Motor neuron (in vitro differentiated cells): ENCODE measurements at regions of chr6 and their contacts with region 1.

Region 1: DNA sequence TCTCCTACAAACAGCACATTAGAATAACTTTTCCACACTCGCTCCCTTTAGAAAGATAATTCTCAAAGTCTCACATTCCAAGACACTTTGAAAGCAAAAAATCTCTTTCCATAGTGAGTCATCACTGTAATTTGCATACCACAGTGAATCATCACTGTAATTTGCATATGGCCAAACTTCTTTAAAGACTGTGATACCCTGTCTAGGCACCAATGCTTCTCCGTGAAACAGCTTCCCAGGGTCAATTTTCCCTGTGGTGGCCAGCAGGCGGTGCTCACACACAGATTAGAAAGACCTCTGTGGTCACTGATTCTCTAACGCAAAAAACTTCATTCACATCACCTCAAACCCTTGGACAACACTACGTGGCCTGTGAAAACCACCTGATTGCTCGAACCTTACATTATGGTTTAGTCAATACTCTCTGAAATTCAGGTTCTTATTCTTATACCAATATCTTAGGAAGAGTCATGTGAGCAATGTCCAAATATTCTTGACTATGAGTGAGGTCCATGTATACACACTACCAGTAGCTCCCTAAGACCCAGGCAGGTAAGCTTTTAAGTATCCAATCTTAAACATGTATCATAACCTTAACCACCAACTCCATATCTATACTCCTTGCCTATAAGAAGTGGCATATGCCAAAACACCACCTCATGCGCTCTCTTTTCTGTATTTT is 78.5 kb upstream of the PHACTR1 start:
- ATAC-seq: peak; percentile 83 to 100 (median 94)
- H3K4me3 ChIP-seq: no peak overlapping the region
- H3K27ac ChIP-seq: no peak overlapping the region
- H3K4me1 ChIP-seq: no peaks in the 10 kb centered on the region

Region 2: GRCh38 chr6:12189661-12190060 is 448.4 kb before region 1 on chr6:
- in situ Hi-C with region 1: no loop called
- ATAC-seq: no peak
- H3K4me3 ChIP-seq: no peak overlapping the region
- H3K27ac ChIP-seq: no peak overlapping the region
- H3K4me1 ChIP-seq: no peaks in the 10 kb centered on the region

Region 3: GRCh38 chr6:12890171-12890790 is 252.2 kb after region 1 on chr6:
- in situ Hi-C with region 1: loop called in 5 of 9 experiments (anchors 25 kb)
- ATAC-seq: no peak
- H3K4me3 ChIP-seq: no peak overlapping the region
- H3K27ac ChIP-seq: no peak overlapping the region
- H3K4me1 ChIP-seq: peaks cover 5 to 10% of the 10 kb centered on the region in 2 donors